Heart right ventricle (tissue), 16 donors: ENCODE measurements at regions of chr2 and their contacts with region 1.

Region 1: GRCh38 chr2:220891405-220891804 is 680.7 kb downstream of the EPHA4 start:
- DNase-seq: no peak
- ATAC-seq: no peak
- H3K4me3 ChIP-seq: no peak overlapping the region
- H3K27ac ChIP-seq: no peak overlapping the region
- H3K4me1 ChIP-seq: peaks cover 0 to 13% (median 0%) of the 10 kb centered on the region in 9 donors
- H3K27me3 ChIP-seq: no peaks in the 10 kb centered on the region
- CTCF ChIP-seq: no peak

Region 2: DNA sequence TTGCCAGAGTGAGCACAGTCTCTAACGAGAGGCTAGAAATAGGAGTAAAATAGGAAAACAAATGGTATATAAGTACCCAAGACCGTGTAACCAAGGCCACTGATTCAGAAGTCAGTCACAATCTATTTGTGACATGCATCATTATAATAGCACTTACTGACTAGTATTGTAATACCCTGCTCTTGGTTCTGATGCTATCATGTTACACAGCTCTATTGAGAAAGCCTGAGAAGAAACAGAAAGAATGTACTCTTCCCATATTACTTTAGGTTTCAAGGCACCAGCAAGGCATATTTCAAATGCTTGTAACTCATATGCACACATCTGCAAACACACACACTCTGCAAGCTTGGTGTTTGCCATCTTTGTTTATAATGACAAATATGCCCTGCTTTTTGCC is 517.5 kb before region 1 on chr2:
- intact Hi-C with region 1: no loop called
- DNase-seq: no peak
- ATAC-seq: no peak
- H3K4me3 ChIP-seq: no peak overlapping the region
- H3K27ac ChIP-seq: no peak overlapping the region
- H3K4me1 ChIP-seq: no peaks in the 10 kb centered on the region
- H3K27me3 ChIP-seq: no peaks in the 10 kb centered on the region
- CTCF ChIP-seq: no peak

Region 3: DNA sequence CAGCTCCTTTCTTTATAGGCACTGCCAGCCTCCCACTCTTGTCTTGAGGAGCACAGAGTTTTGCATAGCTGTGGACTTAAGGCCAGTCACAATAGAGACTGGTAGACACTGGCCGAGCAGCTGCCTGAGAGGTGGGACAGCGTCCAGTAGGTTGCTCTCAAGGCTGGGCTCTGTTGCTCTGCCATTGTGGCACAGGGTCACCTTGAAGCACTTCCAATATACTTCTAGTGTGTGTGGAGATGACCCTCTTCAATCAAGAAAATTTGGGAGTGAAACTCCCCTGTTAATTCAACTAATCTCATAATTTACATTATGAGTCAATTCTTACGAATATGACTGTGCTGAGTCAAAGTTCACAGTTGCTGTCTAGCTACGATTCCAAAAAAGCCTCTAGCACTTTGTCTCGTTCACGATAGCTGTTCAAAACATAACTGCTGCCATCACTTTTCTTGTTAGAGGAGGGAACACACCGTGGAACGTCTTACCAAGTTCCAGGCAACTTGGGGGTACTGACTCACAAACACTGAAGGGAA is 44.5 kb after region 1 on chr2:
- intact Hi-C with region 1: no loop called
- DNase-seq: peak in 1 of 2 donors; percentile 20
- ATAC-seq: peak in 5 of 8 donors; percentile 47 to 76 (median 59)
- H3K4me3 ChIP-seq: peak overlapping the region in 1 of 10 donors; percentile 33
- H3K27ac ChIP-seq: peak overlapping the region in 7 of 10 donors; percentile 23 to 58 (median 41)
- H3K4me1 ChIP-seq: peaks cover 0 to 22% (median 0%) of the 10 kb centered on the region in 9 donors
- H3K27me3 ChIP-seq: no peaks in the 10 kb centered on the region
- CTCF ChIP-seq: no peak

Region 4: GRCh38 chr2:221005338-221005737 is 113.9 kb after region 1 on chr2:
- intact Hi-C with region 1: loop called in 1 of 10 experiments (anchors 5 kb)
- DNase-seq: no peak
- ATAC-seq: no peak
- H3K4me3 ChIP-seq: no peak overlapping the region
- H3K27ac ChIP-seq: no peak overlapping the region
- H3K4me1 ChIP-seq: no peaks in the 10 kb centered on the region
- H3K27me3 ChIP-seq: no peaks in the 10 kb centered on the region
- CTCF ChIP-seq: no peak

Region 5: DNA sequence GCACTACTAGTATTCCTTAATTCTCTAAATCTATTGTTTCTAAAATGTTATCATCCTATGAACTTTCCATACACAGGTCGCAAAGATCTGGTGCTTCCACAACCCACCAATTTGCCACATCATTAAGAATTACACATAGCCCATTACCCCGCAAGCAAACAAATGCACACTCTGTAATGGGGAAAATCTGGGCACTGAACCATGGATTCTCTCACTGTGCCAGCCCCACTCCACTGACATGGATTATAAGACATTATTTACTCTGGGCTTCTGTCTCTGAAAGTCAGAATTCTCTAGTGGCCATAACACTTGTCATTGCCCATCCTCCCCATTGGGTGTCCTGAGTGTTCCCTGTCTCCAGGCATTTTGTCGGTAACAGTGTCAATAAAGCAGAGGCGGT is 143.6 kb after region 1 on chr2:
- intact Hi-C with region 1: no loop called
- DNase-seq: no peak
- ATAC-seq: no peak
- H3K4me3 ChIP-seq: no peak overlapping the region
- H3K27ac ChIP-seq: no peak overlapping the region
- H3K4me1 ChIP-seq: peaks cover 0 to 4% (median 0%) of the 10 kb centered on the region in 9 donors
- H3K27me3 ChIP-seq: no peaks in the 10 kb centered on the region
- CTCF ChIP-seq: no peak

Region 6: DNA sequence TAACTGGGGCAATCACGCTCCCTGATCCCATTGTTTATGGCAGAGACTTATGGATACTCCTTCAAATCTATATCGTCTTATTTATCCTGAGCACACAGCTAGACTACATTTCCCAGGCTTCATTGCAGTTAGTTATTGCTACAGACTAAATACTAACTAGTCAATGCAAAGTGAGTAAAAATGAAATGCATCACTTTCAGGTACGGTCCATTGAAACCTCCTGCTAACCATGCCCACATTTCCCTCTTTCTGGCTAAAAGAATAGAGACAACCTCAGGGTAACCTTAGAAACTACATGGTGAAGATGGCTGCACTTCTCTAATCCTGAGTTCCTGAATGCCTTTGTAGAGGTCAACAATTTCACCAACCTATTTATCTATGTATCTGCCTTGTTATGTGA is 243.3 kb after region 1 on chr2:
- intact Hi-C with region 1: no loop called
- DNase-seq: no peak
- ATAC-seq: no peak
- H3K4me3 ChIP-seq: no peak overlapping the region
- H3K27ac ChIP-seq: no peak overlapping the region
- H3K4me1 ChIP-seq: peaks cover 0 to 3% (median 0%) of the 10 kb centered on the region in 9 donors
- H3K27me3 ChIP-seq: no peaks in the 10 kb centered on the region
- CTCF ChIP-seq: no peak